Aorta (tissue), 5 donors: ENCODE measurements at regions of chr6 and their contacts with region 1.

Region 1: GRCh38 chr6:2988426-2989331 is 11.0 kb upstream of the NQO2 start:
- DNase-seq: peak; percentile 97
- ATAC-seq: peak; percentile 94
- H3K4me3 ChIP-seq: peak overlapping the region; percentile 86 to 93
- H3K27ac ChIP-seq: peak overlapping the region; percentile 78 to 88
- H3K4me1 ChIP-seq: peaks cover 0 to 3% of the 10 kb centered on the region in 2 donors
- H3K27me3 ChIP-seq: no peaks in the 10 kb centered on the region

Region 2: DNA sequence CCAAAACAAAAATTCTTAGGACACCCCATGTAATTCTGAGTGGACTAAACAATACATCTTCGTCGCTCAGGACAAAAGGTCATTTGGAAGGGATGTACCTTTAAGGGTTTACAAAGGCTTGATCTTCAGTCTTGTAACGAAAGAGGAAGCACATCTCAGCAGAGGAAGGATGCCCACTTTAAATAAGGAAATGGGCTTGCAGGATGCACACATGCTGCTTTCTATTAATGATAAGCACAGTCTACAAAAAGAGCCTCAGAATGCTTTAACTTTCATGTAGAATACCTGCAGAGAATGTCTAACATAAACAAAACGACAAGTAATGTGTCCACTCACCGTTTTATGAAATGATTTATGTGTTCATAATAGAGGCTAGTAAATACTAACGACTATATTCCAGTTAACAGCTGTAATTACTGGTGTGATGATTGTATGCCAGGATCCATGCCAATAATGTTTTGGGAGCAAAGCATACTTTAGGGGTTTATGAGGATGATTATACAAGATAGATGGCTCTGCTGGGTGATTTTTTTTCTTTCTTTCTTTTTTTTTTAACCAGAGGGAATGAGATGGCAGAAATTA is 960.1 kb before region 1 on chr6:
- intact Hi-C with region 1: no loop called
- DNase-seq: no peak
- ATAC-seq: no peak
- H3K4me3 ChIP-seq: no peak overlapping the region
- H3K27ac ChIP-seq: no peak overlapping the region
- H3K4me1 ChIP-seq: no peaks in the 10 kb centered on the region
- H3K27me3 ChIP-seq: no peaks in the 10 kb centered on the region

Region 3: DNA sequence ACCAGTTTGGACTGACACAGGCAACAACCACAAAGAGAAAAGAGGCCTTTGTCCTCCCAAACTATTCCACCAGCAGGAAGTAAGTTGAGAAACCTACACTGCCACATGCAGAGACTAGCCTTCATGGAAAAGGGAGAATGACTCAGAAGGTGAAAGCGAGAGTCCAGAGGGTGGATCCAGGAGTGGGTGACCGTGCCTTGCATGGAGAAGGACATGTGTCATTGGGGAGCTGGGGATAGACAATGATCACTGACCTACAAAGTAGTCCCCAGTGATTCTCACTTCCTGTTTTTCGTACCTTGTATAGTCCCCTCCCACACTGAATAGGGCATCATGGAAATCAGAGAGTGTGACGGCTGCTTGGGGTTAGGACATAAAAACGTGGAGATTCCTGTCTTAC is 329.9 kb before region 1 on chr6:
- intact Hi-C with region 1: no loop called
- DNase-seq: no peak
- ATAC-seq: no peak
- H3K4me3 ChIP-seq: no peak overlapping the region
- H3K27ac ChIP-seq: no peak overlapping the region
- H3K4me1 ChIP-seq: no peaks in the 10 kb centered on the region
- H3K27me3 ChIP-seq: no peaks in the 10 kb centered on the region

Region 4: DNA sequence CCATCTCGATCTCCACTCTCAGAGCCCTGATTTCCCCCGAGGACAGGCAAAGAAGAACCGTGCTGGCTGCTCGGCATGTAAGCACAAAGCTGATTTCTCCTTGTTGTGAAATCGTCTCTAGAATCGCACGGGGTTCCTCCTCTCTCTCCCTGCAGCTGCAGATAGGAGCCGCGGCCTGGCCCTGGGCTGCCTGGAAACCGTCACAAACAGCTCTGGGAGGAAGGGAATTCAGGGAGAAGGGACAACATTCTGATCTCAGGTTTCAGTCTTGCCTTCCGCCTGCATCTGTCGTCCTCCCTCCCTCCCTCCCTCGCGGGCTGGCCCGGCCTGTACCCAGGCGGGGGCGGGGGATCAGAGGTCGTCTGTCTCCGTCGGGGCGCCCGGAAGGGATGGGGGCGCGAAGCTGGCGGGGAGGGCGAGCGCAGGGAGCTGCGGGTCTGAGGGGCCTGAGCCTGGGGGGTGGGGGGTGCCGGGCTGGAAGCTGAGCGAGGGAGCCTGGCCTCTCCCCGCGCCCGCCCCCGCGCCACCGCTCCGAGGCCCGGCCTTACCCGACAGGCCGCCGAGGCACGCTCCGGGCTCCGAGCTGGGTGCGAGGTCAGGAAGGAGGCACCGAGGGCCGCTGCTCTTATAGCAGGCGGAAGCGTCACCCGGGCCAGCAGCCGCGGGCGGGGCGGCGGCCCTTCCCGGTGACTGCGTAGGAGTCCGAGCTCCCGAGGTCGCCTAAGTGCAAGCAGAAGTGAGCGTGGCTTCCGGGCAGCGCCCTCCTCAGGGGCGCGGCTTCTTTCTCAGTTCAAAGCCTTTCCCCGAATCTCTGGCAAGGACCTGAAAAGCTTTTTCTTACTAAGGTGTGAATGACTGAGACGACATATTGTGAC is 147.2 kb before region 1 on chr6 and contains the start of gene SERPINB1:
- intact Hi-C with region 1: loop called in 1 of 2 experiments (anchors 5 kb)
- DNase-seq: peak; percentile 96 to 97
- ATAC-seq: peak; percentile 93
- H3K4me3 ChIP-seq: peak within 1 kb of the TSS; percentile 36 to 61
- H3K27ac ChIP-seq: peak within 1 kb of the TSS; percentile 84 to 94
- H3K4me1 ChIP-seq: peaks cover 0 to 3% of the 10 kb centered on the region in 2 donors
- H3K27me3 ChIP-seq: no peaks in the 10 kb centered on the region
- total RNA-seq, gene SERPINB1: 42.8 to 46.6 TPM

Region 5: DNA sequence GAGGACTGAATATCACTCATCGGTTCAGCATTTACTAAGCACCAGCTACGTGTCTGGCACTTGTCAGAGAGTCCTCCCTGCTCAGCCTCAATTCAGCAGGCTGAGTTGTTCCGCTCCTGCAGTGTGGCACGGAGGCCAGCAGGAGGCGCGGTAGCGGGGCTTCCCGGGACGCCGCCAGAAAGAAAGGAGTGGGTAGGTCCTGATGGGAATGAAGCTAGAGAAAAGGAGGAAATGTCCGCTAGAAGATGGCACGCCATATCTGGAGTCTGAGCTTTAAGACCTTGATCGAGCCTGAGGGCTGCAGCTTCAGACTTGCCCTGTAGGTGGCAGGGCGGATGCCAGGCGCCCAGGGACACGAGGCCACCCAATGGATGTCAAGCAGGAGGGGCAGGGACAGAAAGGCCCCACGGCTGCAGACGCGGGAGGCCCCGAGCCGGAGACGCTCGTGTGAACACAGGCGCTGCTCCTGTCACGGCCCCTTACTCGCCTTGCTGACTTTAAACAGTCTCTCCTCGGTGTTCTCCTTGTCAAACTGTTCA is 36.1 kb before region 1 on chr6:
- intact Hi-C with region 1: loop called (anchors 2 kb)
- DNase-seq: peak; percentile 80 to 93
- ATAC-seq: peak; percentile 89
- H3K4me3 ChIP-seq: no peak overlapping the region
- H3K27ac ChIP-seq: peak overlapping the region in 1 of 2 donors; percentile 9
- H3K4me1 ChIP-seq: no peaks in the 10 kb centered on the region
- H3K27me3 ChIP-seq: no peaks in the 10 kb centered on the region

Region 6: DNA sequence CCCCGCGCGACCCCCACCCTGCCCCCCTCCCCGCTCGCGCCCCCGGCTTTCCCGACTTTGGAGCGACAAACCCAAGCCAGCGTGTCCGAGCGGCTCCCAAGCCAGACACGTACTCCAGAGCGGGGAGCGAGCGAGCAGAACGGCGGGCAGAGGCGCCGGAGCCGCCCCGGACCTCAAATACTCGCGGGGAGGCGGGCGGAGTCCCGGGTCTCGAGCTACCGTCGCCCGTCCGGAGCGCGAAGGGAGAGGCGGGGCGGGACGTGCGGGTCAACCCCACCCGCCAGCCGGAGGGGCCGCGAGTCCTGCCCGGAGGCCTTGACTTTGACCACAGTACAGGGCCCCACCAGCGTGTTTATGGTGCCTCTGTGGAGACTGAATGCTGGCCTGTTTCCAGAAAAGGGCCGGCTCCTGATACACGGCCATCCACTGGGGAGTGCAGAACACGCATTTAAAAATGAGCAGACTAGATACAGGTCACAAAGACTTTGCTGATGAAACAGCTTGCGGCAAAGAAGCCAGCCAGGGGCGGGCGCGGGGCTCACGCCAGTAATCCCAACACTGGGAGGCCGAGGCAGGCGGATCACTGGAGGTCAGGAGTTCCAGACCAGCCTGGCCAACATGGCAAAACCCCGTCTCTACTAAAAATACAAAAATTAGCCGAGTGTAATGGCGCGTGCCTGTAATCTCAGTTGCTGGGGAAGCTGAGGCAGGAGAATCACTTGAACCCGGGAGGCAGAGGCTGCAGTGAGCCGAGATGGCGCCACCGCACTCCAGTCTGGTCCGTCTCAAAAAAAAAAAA is 17.1 kb before region 1 on chr6 and contains the start of gene SERPINB6:
- intact Hi-C with region 1: loop called in 1 of 2 experiments (anchors 2 kb)
- DNase-seq: peak; percentile 87 to 91
- ATAC-seq: peak; percentile 93
- H3K4me3 ChIP-seq: peak within 1 kb of the TSS; percentile 74 to 75
- H3K27ac ChIP-seq: peak within 1 kb of the TSS; percentile 66 to 79
- H3K4me1 ChIP-seq: no peaks in the 10 kb centered on the region
- H3K27me3 ChIP-seq: no peaks in the 10 kb centered on the region
- total RNA-seq, gene SERPINB6: 111 to 132 TPM

Region 7: GRCh38 chr6:3013479-3013878 is 24.8 kb after region 1 on chr6:
- intact Hi-C with region 1: no loop called
- DNase-seq: peak in 1 of 2 donors; percentile 71
- ATAC-seq: peak; percentile 52
- H3K4me3 ChIP-seq: no peak overlapping the region
- H3K27ac ChIP-seq: no peak overlapping the region
- H3K4me1 ChIP-seq: no peaks in the 10 kb centered on the region
- H3K27me3 ChIP-seq: no peaks in the 10 kb centered on the region

Region 8: GRCh38 chr6:3139090-3139903 is 150.6 kb after region 1 on chr6:
- intact Hi-C with region 1: no loop called
- DNase-seq: peak in 1 of 2 donors; percentile 84
- ATAC-seq: peak; percentile 73
- H3K4me3 ChIP-seq: no peak overlapping the region
- H3K27ac ChIP-seq: no peak overlapping the region
- H3K4me1 ChIP-seq: no peaks in the 10 kb centered on the region
- H3K27me3 ChIP-seq: no peaks in the 10 kb centered on the region